CD8-positive, alpha-beta T cell (primary cell): ENCODE measurements at regions of chr1 and their contacts with region 1.

Region 1: DNA sequence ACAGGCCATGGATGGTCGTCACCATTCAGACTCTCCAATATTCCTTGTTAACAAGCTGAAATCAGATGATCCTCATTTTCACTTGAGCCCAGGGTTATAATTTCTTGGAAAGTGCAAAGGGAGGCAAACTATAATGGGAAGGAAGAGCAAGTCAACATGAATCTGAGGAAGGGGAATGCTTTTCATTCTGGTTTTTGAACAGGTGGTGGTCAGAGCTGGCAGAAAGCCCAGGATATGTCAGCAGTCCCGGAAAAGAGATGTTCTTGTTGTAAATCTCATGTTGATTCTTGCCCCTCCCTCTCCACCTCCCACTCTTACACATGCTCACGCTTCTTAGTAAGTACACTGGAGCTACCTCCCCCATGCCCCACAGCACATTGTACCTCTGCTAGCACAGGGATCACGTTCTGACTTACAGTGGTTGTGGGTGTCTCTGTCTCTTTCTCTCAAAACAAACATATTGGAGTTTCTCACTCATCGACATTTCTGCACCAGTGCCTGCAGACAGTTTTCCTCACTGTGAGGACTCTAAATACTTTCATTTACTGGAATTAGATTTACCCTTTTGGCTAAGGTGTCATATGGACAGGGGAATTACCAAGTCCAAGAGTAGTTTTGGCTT is 77.6 kb downstream of the XCL2 start:
- DNase-seq: peak in 6 of 9 experiments; percentile 20 to 66 (median 47)
- ATAC-seq: peak; percentile 79
- H3K4me3 ChIP-seq: no peak overlapping the region
- H3K4me3 Mint-ChIP-seq: peak overlapping the region; percentile 38
- H3K27ac ChIP-seq: peak overlapping the region in 1 of 2 experiments; percentile 70
- H3K27ac Mint-ChIP-seq: peak overlapping the region; percentile 90
- H3K4me1 ChIP-seq: peaks cover 54% of the 10 kb centered on the region
- H3K4me1 Mint-ChIP-seq: peaks cover 64% of the 10 kb centered on the region
- H3K27me3 ChIP-seq: no peaks in the 10 kb centered on the region
- H3K27me3 Mint-ChIP-seq: no peaks in the 10 kb centered on the region
- CTCF ChIP-seq: no peak

Region 2: GRCh38 chr1:168477792-168478191 is 11.6 kb after region 1 on chr1:
- CTCF ChIA-PET with region 1: no interaction called
- POLR2A ChIA-PET with region 1: interaction called, 4 read pairs
- intact Hi-C with region 1: loop called in 1 of 2 experiments (anchors 1 kb)
- DNase-seq: no peak
- ATAC-seq: no peak
- H3K4me3 ChIP-seq: no peak overlapping the region
- H3K4me3 Mint-ChIP-seq: no peak overlapping the region
- H3K27ac ChIP-seq: no peak overlapping the region
- H3K27ac Mint-ChIP-seq: peak overlapping the region; percentile 58
- H3K4me1 ChIP-seq: peaks cover 32% of the 10 kb centered on the region
- H3K4me1 Mint-ChIP-seq: peaks cover 70% of the 10 kb centered on the region
- H3K27me3 ChIP-seq: no peaks in the 10 kb centered on the region
- H3K27me3 Mint-ChIP-seq: no peaks in the 10 kb centered on the region
- CTCF ChIP-seq: no peak

Region 3: GRCh38 chr1:168485048-168485447 is 18.8 kb after region 1 on chr1:
- CTCF ChIA-PET with region 1: no interaction called
- POLR2A ChIA-PET with region 1: no interaction called
- intact Hi-C with region 1: loop called in 1 of 2 experiments (anchors 2 kb)
- DNase-seq: peak in 5 of 9 experiments; percentile 13 to 63 (median 41)
- ATAC-seq: peak; percentile 29
- H3K4me3 ChIP-seq: peak overlapping the region in 1 of 2 experiments; percentile 18
- H3K4me3 Mint-ChIP-seq: peak overlapping the region; percentile 48
- H3K27ac ChIP-seq: peak overlapping the region in 1 of 2 experiments; percentile 69
- H3K27ac Mint-ChIP-seq: peak overlapping the region; percentile 87
- H3K4me1 ChIP-seq: peaks cover 50% of the 10 kb centered on the region
- H3K4me1 Mint-ChIP-seq: peaks cover 69% of the 10 kb centered on the region
- H3K27me3 ChIP-seq: no peaks in the 10 kb centered on the region
- H3K27me3 Mint-ChIP-seq: no peaks in the 10 kb centered on the region
- CTCF ChIP-seq: no peak